ENCODE measurements at regions of chr11 and their contacts with region 1.

Region 1: GRCh38 chr11:14764579-14765527 is 121.2 kb downstream of the PDE3B start:
- DNase-seq: peak; percentile 31
- H3K4me3 Mint-ChIP-seq: peak overlapping the region; percentile 48
- H3K27ac Mint-ChIP-seq: no peak overlapping the region
- H3K4me1 Mint-ChIP-seq: peaks cover 30% of the 10 kb centered on the region
- H3K27me3 Mint-ChIP-seq: no peaks in the 10 kb centered on the region

Region 2: GRCh38 chr11:14358729-14359439 is 406.0 kb before region 1 on chr11 and contains the start of gene RRAS2:
- CTCF ChIA-PET with region 1: no interaction called
- POLR2A ChIA-PET with region 1: no interaction called
- intact Hi-C with region 1: loop called (anchors 10 kb)
- DNase-seq: peak; percentile 83
- H3K4me3 Mint-ChIP-seq: peak within 1 kb of the TSS; percentile 92
- H3K27ac Mint-ChIP-seq: peak within 1 kb of the TSS; percentile 81
- H3K4me1 Mint-ChIP-seq: peaks cover 32% of the 10 kb centered on the region
- H3K27me3 Mint-ChIP-seq: no peaks in the 10 kb centered on the region
- total RNA-seq, gene RRAS2: 37.7 to 39.5 TPM

Region 3: DNA sequence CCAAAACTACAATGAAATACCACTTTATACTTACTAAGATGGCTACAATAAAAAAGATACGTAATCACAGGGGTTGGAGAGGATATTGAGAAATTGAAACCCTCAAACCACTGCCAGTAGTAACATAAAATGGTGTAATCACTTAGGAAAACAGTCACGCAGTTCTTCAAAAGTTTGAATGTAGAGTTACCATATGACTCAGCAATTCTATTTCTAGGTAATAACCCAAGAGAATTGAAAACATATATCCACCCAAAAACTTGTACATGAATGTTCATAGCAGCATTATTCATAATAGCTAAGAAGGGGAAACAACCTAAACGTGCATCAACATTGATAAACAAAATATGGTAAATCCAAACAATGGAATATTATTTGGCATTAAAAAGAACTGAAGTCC is 220.2 kb before region 1 on chr11:
- CTCF ChIA-PET with region 1: interaction called, 3 read pairs
- POLR2A ChIA-PET with region 1: interaction called, 4 read pairs
- intact Hi-C with region 1: loop called (anchors 1 kb)
- DNase-seq: no peak
- H3K4me3 Mint-ChIP-seq: no peak overlapping the region
- H3K27ac Mint-ChIP-seq: peak overlapping the region; percentile 82
- H3K4me1 Mint-ChIP-seq: peaks cover 39% of the 10 kb centered on the region
- H3K27me3 Mint-ChIP-seq: no peaks in the 10 kb centered on the region

Region 4: DNA sequence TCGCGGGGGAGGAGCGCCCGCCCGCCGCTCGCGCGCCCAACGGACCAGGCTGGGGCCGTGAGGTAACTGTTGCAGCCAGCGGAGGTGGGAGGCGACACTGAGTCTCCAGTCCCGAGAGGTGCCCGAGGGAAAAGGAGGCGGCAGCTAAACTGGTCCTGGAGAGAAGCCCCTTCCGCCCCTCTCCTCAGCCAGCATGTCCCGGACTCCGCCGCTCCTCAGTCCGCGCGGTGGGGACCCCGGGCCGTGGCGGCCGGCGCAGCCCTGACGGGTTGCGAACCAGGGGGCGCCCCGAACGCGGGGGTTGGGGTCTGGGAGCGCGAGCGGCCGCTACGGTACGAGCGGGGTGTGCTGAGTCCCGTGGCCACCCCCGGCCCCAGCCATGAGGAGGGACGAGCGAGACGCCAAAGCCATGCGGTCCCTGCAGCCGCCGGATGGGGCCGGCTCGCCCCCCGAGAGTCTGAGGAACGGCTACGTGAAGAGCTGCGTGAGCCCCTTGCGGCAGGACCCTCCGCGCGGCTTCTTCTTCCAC is 121.1 kb before region 1 on chr11 and contains the start of gene PDE3B:
- CTCF ChIA-PET with region 1: interaction called, 13 read pairs
- POLR2A ChIA-PET with region 1: interaction called, 30 read pairs
- intact Hi-C with region 1: loop called (anchors 1 kb)
- DNase-seq: peak; percentile 87
- H3K4me3 Mint-ChIP-seq: peak within 1 kb of the TSS; percentile 71
- H3K27ac Mint-ChIP-seq: peak within 1 kb of the TSS; percentile 89
- H3K4me1 Mint-ChIP-seq: peaks cover 49% of the 10 kb centered on the region
- H3K27me3 Mint-ChIP-seq: no peaks in the 10 kb centered on the region
- total RNA-seq, gene PDE3B: 21.6 to 21.8 TPM

Region 5: GRCh38 chr11:14784230-14784629 is 19.4 kb after region 1 on chr11:
- CTCF ChIA-PET with region 1: interaction called, 4 read pairs
- POLR2A ChIA-PET with region 1: no interaction called
- intact Hi-C with region 1: loop called (anchors 1 kb)
- DNase-seq: no peak
- H3K4me3 Mint-ChIP-seq: no peak overlapping the region
- H3K27ac Mint-ChIP-seq: no peak overlapping the region
- H3K4me1 Mint-ChIP-seq: peaks cover 34% of the 10 kb centered on the region
- H3K27me3 Mint-ChIP-seq: no peaks in the 10 kb centered on the region

Region 6: GRCh38 chr11:14809466-14809865 is 44.6 kb after region 1 on chr11:
- CTCF ChIA-PET with region 1: no interaction called
- POLR2A ChIA-PET with region 1: no interaction called
- intact Hi-C with region 1: no loop called
- DNase-seq: no peak
- H3K4me3 Mint-ChIP-seq: no peak overlapping the region
- H3K27ac Mint-ChIP-seq: no peak overlapping the region
- H3K4me1 Mint-ChIP-seq: no peaks in the 10 kb centered on the region
- H3K27me3 Mint-ChIP-seq: no peaks in the 10 kb centered on the region

Region 7: GRCh38 chr11:14861680-14862079 is 96.8 kb after region 1 on chr11:
- CTCF ChIA-PET with region 1: no interaction called
- POLR2A ChIA-PET with region 1: no interaction called
- intact Hi-C with region 1: no loop called
- DNase-seq: no peak
- H3K4me3 Mint-ChIP-seq: no peak overlapping the region
- H3K27ac Mint-ChIP-seq: no peak overlapping the region
- H3K4me1 Mint-ChIP-seq: peaks cover 17% of the 10 kb centered on the region
- H3K27me3 Mint-ChIP-seq: no peaks in the 10 kb centered on the region

Region 8: DNA sequence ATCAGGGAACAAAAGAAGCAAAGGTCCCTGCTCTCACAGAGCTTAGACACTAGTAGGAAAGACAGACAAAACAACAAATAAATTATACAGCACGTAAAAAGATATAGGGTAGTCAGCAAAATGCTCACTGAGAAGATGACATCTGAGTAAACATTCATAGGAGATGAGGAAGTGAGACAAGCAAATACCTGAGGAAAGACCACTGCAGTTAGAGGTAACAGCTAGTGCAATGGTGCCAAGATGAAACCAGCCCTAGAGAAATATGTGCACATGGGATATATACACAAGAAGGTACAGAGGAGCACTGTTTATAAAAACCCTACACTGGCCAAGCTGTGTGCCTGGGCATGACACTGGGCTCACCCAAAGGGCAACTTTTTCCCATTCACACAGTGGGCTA is 117.3 kb after region 1 on chr11:
- CTCF ChIA-PET with region 1: no interaction called
- POLR2A ChIA-PET with region 1: no interaction called
- intact Hi-C with region 1: no loop called
- DNase-seq: no peak
- H3K4me3 Mint-ChIP-seq: no peak overlapping the region
- H3K27ac Mint-ChIP-seq: no peak overlapping the region
- H3K4me1 Mint-ChIP-seq: peaks cover 18% of the 10 kb centered on the region
- H3K27me3 Mint-ChIP-seq: no peaks in the 10 kb centered on the region